ENCODE measurements at regions of chrX and their contacts with region 1.

Region 1: DNA sequence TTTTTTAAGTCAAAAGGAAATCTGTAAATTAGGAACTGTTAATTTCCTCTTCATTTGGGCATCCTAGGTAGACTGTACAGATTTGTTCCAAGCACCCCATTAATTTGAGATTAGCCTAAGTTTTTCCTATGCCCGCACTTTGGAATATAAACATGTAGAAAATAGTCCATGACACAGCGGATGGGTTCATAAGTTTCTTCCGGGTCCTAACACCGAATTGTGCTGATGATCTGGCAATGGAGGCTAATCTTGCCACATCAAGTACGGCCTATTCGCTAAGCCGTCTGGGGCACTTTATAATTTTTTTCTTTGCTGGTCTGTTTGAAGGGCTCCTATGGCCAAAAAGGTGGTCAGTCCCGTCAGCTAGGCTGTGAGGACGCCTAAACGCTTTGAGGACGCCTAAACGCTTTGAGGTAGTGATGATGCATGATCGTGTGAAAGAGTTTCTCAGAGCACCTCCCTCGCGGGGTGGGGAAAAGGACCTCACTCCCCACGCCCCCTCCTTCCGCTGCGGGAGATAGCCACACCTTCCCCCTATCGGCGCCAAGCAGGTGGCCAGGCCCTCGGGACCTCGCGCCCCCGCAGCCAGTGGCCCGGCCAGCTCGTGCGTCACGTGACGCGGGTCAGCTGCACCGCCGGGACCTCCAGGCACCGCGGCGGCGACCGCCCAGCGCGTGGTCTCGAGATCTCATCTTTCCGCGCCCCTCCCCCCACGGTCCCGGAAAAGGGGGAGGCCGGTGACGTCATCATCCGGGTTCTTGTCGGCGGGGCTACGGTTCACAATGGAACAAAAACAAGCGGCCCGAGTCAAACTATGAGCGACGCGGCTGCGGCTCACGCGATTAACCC is 977 bp upstream of the USP9X start:
- DNase-seq: peak; percentile 97
- H3K4me3 ChIP-seq: peak overlapping the region; percentile 88 to 98 (median 97)
- H3K27ac ChIP-seq: peak overlapping the region; percentile 98
- H3K4me1 ChIP-seq: no peaks in the 10 kb centered on the region
- H3K27me3 ChIP-seq: no peaks in the 10 kb centered on the region
- CTCF ChIP-seq: no peak

Region 2: GRCh38 chrX:40933132-40933705 is 151.0 kb before region 1 on chrX:
- CTCF ChIA-PET with region 1: no interaction called
- dilution Hi-C with region 1: no loop called
- in situ Hi-C with region 1: no loop called
- intact Hi-C with region 1: loop called (anchors 2 kb)
- DNase-seq: no peak
- H3K4me3 ChIP-seq: peak overlapping the region in 1 of 3 experiments; percentile 2
- H3K27ac ChIP-seq: peak overlapping the region; percentile 18
- H3K4me1 ChIP-seq: peaks cover 6% of the 10 kb centered on the region
- H3K27me3 ChIP-seq: no peaks in the 10 kb centered on the region
- CTCF ChIP-seq: no peak

Region 3: DNA sequence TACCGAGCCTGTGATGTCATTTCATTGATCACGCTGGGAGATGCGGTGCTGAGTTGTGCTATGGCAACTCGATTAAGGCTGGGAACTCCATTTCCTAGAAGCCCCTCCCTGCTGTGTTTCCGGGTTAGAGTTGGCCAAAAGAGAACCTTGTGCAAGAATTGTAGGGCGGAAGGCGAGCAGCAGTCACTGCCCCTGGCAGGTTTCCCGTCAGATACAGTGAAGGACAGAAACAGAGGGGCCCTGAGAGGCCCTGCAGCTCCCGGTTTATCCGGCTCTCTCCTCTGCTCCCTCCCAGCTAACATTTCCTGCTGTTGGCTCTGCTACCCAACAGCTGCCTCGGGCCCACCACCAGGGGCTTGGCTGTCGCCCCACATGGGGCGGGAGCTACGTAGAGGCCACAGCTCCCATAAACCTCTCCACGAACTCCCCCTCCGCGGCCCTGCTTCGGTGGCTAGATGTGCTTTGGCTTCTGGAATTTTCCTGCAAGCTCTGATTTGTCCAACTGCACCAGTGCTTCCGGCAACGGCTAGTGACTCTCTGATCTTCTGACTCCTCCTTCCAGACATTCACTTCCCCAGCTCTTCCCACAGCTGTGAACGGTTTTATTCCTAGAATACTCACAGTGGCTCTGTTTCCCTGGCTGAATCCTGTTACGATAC is 74.0 kb before region 1 on chrX:
- CTCF ChIA-PET with region 1: no interaction called
- dilution Hi-C with region 1: no loop called
- in situ Hi-C with region 1: no loop called
- intact Hi-C with region 1: loop called (anchors 1 kb)
- DNase-seq: peak; percentile 75
- H3K4me3 ChIP-seq: peak overlapping the region; percentile 7 to 35 (median 13)
- H3K27ac ChIP-seq: peak overlapping the region; percentile 85
- H3K4me1 ChIP-seq: peaks cover 9% of the 10 kb centered on the region
- H3K27me3 ChIP-seq: no peaks in the 10 kb centered on the region
- CTCF ChIP-seq: no peak

Region 4: DNA sequence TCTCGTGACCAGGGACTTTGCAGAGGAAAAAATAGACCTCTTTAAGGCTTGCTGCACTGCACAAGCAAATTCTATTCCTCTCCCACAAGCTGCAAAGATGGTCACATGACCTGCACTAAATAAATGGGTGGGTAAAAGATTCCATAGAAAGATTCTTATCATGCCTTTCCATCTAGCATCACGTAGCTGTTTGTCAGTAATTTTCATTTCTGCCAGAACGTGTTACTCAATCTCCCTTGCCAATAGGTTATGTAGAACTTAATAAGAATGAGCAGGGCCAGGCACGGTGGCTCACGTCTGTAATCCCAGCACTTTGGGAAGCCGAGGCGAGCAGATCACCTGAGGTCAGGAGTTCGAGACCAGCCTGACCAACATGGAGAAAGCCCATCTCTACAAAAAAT is 56.8 kb before region 1 on chrX:
- CTCF ChIA-PET with region 1: no interaction called
- dilution Hi-C with region 1: no loop called
- in situ Hi-C with region 1: loop called in 1 of 2 experiments (anchors 10 kb)
- intact Hi-C with region 1: loop called (anchors 2 kb)
- DNase-seq: peak; percentile 67
- H3K4me3 ChIP-seq: no peak overlapping the region
- H3K27ac ChIP-seq: peak overlapping the region; percentile 3
- H3K4me1 ChIP-seq: peaks cover 9% of the 10 kb centered on the region
- H3K27me3 ChIP-seq: no peaks in the 10 kb centered on the region
- CTCF ChIP-seq: no peak

Measured in mammary epithelial cell (primary cell).